ENCODE measurements at regions of chr3 and their contacts with region 1.

Region 1: DNA sequence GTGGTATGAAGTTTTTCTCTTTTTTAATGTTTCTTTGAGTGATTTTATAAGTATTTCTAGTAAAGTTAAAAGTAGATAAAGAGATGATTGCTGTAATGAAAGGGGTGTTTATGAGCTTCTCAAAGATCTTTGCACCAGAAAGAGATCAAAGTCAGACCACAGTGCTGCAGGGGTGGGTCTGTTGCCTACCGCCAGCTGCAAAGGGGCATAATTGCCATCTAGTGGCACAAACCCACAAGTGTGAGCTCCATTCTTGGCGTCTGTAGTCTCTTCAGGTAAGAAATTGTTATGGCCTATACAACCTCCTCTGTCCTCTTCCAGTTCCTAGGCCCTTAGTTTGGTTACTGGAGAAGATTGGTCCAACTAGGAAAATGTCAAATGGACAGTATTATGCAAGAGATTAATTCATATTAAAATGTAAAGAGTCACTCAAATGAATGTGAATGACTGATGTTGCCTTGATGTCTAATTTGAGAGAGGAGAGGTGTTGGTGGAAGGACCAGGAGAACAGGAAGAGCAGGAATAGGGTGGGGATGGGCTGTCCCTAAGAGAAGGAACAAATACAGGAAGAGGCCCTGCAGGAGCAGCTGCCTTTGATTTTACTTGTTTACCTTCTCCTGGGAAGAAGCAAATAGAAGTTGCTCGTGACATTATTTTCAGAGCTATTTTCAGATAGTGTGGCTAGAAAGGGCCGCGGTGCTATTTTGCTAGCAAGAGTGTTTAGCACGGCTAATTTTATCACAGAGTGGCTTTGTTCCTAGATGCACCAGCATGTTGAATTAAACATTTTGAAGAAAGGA is 53.0 kb upstream of the GSK3B start:
- DNase-seq: peak; percentile 19
- ATAC-seq: peak; percentile 87
- H3K4me3 Mint-ChIP-seq: no peak overlapping the region
- H3K27ac Mint-ChIP-seq: no peak overlapping the region
- H3K4me1 Mint-ChIP-seq: peaks cover 24% of the 10 kb centered on the region
- H3K27me3 Mint-ChIP-seq: no peaks in the 10 kb centered on the region
- CTCF ChIP-seq: no peak

Region 2: DNA sequence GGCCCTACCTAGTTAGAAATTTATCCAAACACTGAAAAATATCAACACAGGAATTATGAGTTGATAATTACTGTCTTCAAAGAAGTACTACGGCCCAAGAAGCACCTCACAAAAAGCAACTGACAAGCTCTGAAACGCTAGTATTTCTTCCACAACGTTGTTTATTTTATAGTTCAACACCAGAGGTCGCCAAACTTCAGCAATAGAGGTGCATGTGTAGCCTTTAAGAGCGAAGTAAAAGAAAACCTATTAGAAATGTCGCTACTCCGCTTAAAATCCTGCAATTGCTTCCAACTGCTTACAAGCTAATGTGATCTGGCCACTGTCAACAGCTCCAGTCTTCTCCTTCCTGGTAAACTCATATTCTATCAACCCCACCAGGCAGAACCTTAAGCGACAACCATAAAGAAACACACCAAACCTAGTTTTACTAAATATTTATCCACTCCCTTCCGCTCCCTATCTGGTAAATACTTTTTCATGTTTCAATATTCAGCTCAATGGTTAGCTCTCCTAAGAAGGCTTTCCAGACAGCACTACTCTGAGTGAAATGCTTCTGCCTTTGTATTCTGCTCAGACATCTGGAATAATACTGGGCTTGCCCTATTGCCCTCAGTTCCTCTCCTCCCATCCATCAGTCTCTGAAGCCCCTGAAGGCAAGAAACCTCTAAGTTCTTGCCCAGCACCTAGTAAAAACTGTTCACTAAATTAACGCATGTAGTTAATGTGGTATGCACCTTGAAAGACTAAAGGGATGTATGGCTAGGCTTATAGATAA is 255.1 kb before region 1 on chr3:
- CTCF ChIA-PET with region 1: interaction called, 22 read pairs
- POLR2A ChIA-PET with region 1: no interaction called
- DNase-seq: peak; percentile 15
- ATAC-seq: peak; percentile 82
- H3K4me3 Mint-ChIP-seq: no peak overlapping the region; the same call in 1 of the 2 replicates
- H3K27ac Mint-ChIP-seq: no peak overlapping the region
- H3K4me1 Mint-ChIP-seq: peaks cover 2% of the 10 kb centered on the region; the same call in 1 of the 2 replicates
- H3K27me3 Mint-ChIP-seq: no peaks in the 10 kb centered on the region; the same call in 1 of the 2 replicates
- CTCF ChIP-seq: peak; percentile 56

Region 3: GRCh38 chr3:120039642-120040610 is 107.3 kb before region 1 on chr3:
- CTCF ChIA-PET with region 1: interaction called, 26 read pairs
- POLR2A ChIA-PET with region 1: no interaction called
- DNase-seq: peak; percentile 47
- ATAC-seq: peak; percentile 86
- H3K4me3 Mint-ChIP-seq: no peak overlapping the region
- H3K27ac Mint-ChIP-seq: peak overlapping the region; percentile 41; the same call in 1 of the 2 replicates
- H3K4me1 Mint-ChIP-seq: peaks cover 48% of the 10 kb centered on the region
- H3K27me3 Mint-ChIP-seq: no peaks in the 10 kb centered on the region
- CTCF ChIP-seq: peak; percentile 59; the same call in 1 of the 2 replicates

Region 4: GRCh38 chr3:120177151-120177550 is 29.9 kb after region 1 on chr3:
- CTCF ChIA-PET with region 1: interaction called, 11 read pairs
- POLR2A ChIA-PET with region 1: no interaction called
- DNase-seq: peak; percentile 13
- ATAC-seq: peak; percentile 77
- H3K4me3 Mint-ChIP-seq: no peak overlapping the region
- H3K27ac Mint-ChIP-seq: no peak overlapping the region
- H3K4me1 Mint-ChIP-seq: peaks cover 13% of the 10 kb centered on the region
- H3K27me3 Mint-ChIP-seq: no peaks in the 10 kb centered on the region
- CTCF ChIP-seq: no peak

Measured in WTC11 (cell line).